ENCODE measurements at regions of chr17 and their contacts with region 1.

Region 1: DNA sequence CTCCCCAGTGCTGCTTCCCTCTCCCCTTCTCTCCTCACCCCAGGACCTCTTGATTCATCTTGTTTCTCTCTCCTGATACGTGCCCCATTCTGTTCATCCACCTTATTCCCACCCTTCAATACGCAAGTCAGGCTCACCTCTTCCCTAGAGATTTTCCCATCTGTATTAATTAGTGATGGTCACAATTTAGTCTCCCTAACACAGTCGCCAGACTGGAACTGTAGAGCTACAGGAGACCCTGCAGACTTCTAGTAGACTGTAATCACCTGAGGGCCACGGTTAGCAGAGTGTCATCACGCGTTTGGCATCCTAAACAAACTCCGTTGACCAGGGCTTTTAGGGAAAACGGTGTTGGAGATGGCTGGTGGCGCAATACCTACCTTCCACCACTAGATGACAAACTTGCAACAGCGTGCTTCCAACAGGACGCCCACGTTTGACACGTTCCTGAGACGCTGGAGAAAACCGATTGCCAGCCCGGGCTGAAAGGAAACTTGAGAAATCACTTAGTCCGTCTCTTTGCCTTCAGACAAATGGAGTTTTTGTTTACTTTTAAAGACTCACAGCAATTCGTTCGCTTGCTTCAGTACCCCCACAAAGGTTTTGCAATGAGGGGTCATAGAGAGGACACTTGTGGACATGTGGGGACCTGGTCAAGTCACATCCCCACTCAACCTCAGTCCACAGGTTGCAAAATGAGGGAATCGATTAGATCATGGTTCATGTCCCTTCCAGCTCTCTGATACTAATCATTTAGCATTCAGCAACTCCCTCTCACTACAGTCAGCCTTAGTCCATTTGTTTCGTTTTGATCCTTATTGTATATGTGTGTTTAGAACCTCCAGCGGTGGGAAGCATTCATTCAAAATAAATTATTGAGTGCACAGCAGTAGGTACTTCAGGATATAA is 20.6 kb downstream of the MYL4 start:
- DNase-seq: peak; percentile 76
- ATAC-seq: peak; percentile 84

Region 2: GRCh38 chr17:47179141-47179540 is 50.6 kb before region 1 on chr17:
- intact Hi-C with region 1: loop called (anchors 5 kb)
- DNase-seq: no peak
- ATAC-seq: no peak

Region 3: GRCh38 chr17:47286198-47286914 is 56.6 kb after region 1 on chr17:
- intact Hi-C with region 1: no loop called
- DNase-seq: no peak
- ATAC-seq: no peak

Region 4: GRCh38 chr17:47315451-47316266 is 85.9 kb after region 1 on chr17:
- intact Hi-C with region 1: loop called (anchors 1 kb)
- DNase-seq: no peak
- ATAC-seq: peak; percentile 76

Region 5: DNA sequence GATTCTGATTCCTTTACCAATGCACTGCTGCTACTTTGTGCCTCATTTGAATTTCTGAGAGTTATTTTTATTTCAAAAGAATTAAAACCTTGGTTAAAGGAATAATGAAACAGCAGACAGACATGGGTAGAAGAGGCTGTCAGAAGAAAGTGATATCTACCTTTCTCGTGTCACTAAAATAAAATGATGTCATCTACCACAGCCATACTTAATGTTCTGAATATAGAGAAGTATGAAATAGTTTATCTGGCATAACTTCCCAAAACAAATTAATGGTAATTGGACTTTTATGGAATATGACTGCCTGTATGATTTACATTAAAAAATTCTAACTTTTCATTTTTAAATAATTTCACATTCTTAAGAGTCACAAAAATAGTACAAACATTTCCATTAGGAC is 146.5 kb after region 1 on chr17:
- intact Hi-C with region 1: no loop called
- DNase-seq: no peak
- ATAC-seq: no peak

Region 6: GRCh38 chr17:47615766-47616424 is 386.1 kb after region 1 on chr17:
- intact Hi-C with region 1: loop called (anchors 10 kb)
- DNase-seq: no peak
- ATAC-seq: peak; percentile 27

Measured in Right ventricle myocardium inferior (tissue), 1 donor.